ENCODE measurements at regions of chr1 and their contacts with region 1.

Region 1: DNA sequence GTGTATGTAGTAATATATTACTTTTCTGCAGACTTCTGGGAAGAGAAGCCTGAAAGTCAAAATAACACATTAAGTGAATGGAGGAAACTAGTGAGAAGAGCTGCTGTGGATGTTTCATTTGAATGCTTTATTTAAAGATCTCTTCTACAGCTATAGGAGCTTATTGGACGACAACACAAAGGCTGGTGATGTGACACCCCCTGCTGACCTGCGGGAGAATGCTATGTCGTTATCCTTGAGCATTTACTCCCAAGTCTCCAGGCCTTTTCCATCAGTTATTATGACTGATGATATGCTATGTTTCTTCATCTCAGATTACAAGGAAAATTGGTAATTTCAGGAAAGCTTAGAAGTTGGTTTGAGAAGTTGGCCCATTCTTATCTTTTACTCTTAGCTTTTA is 22.3 kb upstream of the PLA2G4A start:
- ATAC-seq: peak in 3 of 8 experiments; percentile 32 to 71 (median 49)
- H3K4me3 ChIP-seq: no peak overlapping the region
- H3K27ac ChIP-seq: no peak overlapping the region
- H3K4me1 ChIP-seq: no peaks in the 10 kb centered on the region

Region 2: GRCh38 chr1:186605762-186606350 is 200.6 kb before region 1 on chr1:
- in situ Hi-C with region 1: loop called in 1 of 9 experiments (anchors 10 kb)
- ATAC-seq: peak in 3 of 8 experiments; percentile 85 to 91 (median 90)
- H3K4me3 ChIP-seq: no peak overlapping the region
- H3K27ac ChIP-seq: no peak overlapping the region
- H3K4me1 ChIP-seq: no peaks in the 10 kb centered on the region

Region 3: DNA sequence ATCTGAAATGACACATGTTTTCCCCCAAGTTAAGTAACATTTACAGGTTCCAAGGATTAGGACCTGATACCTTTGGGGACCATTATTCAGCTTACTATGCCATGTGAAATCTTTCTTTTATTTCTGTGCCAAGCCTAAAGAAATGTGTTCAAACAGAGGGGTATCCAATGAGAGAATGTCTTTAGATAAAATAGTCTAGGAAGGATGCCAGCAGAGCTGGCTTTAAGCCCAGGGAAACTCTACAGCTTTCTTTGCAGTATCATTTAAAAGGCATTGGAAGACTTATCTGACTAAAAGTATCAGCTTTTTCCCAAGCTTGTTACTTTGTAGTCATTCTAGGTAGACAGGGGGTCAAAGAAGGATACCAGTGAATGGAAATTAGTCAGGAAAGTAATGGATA is 882.7 kb after region 1 on chr1:
- in situ Hi-C with region 1: no loop called
- ATAC-seq: peak in 2 of 8 experiments; percentile 24 to 88
- H3K4me3 ChIP-seq: no peak overlapping the region
- H3K27ac ChIP-seq: no peak overlapping the region
- H3K4me1 ChIP-seq: no peaks in the 10 kb centered on the region